ENCODE measurements at regions of chr1 and their contacts with region 1.

Region 1: DNA sequence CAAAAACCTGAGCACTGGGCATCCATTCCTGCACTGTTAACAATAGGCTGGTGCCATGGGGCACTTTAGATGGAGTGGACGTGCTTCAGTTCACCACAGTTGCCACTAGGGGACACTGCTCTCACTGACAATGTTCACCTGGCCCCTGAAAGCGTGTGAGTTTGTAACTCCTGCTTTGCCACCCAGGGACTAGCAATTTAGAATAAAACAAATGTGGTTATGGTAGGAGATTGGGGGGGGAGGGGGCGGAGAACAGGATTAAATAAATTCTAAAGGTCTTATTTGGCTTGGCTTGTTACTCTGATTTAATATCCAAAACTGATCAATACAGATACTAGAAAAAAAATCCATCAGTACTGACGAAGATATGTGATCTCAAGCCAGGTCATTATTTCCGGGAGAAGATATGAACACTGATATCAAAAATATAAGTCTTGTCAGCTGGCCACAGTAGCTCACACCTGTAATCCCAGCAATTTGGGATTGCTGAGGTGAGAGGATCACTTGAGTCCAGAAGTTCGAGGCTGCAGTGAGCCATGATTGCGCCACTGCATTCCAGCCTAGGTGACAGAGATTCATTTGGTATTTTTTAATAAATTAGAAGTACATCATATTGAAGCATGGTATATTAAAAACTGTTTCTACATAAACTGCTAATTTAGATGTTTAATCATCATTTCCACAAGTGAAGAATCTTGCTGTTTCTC is 23.2 kb downstream of the INTS7 start:
- DNase-seq: peak; percentile 16 to 55 (median 46)
- ATAC-seq: peak; percentile 100
- H3K4me3 ChIP-seq: no peak overlapping the region
- H3K4me3 Mint-ChIP-seq: no peak overlapping the region
- H3K27ac ChIP-seq: no peak overlapping the region
- H3K27ac Mint-ChIP-seq: no peak overlapping the region
- H3K4me1 ChIP-seq: no peaks in the 10 kb centered on the region
- H3K4me1 Mint-ChIP-seq: peaks cover 0 to 3% (median 0%) of the 10 kb centered on the region in 7 donors
- H3K27me3 ChIP-seq: no peaks in the 10 kb centered on the region
- H3K27me3 Mint-ChIP-seq: no peaks in the 10 kb centered on the region

Region 2: DNA sequence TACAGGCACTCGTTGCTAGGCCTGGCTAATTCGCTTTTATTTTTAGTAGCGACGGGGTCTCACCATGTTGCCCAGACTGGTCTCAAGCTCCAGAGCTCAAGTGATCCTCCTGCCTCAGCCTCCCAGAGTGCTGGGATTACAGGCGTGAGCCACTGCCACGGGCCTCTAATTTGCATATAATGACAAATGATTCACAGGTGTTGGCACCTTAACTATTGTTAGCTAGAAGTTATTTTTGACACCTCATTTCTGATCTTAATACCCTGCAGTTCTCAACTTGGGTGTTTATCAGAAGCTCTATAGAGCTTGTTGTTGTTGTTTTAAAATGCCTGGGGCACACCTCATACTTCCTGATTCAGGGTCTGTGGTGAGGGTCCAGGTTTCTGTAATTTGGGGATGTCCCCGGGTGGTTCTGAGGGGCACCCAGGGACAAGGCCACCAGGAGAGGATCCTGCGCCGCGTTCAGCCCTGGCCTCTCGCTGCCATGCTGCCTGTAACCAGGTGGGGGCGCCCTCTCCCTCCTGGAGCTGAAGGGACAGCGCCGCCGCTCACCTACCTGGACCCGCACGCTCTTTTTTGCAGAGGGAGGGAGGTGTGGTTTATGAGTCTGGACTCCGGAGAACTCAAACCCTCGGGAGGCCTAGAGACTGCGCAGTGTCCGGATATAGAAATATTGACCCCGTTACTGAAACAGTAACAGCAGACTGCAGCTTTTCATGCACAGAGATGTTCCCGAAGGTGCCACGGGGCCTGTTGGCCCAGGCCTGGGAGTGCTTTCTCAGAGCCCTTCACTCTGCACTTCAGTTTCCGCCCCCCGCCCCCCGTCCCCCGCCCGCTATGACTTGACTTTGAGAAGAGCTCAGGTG is 313.8 kb before region 1 on chr1:
- CTCF ChIA-PET with region 1: interaction called, 5 read pairs
- POLR2A ChIA-PET with region 1: no interaction called
- intact Hi-C with region 1: loop called in 1 of 2 experiments (anchors 1 kb)
- DNase-seq: peak; percentile 60 to 87 (median 72)
- ATAC-seq: peak; percentile 96
- H3K4me3 ChIP-seq: no peak overlapping the region
- H3K4me3 Mint-ChIP-seq: peak overlapping the region; percentile 23 to 83 (median 65)
- H3K27ac ChIP-seq: no peak overlapping the region
- H3K27ac Mint-ChIP-seq: peak overlapping the region in 2 of 9 donors; percentile 5 to 62
- H3K4me1 ChIP-seq: peaks cover 4 to 16% of the 10 kb centered on the region in 2 donors
- H3K4me1 Mint-ChIP-seq: peaks cover 0 to 42% (median 9%) of the 10 kb centered on the region in 7 donors
- H3K27me3 ChIP-seq: no peaks in the 10 kb centered on the region
- H3K27me3 Mint-ChIP-seq: peaks cover 0 to 37% (median 0%) of the 10 kb centered on the region in 5 donors

Region 3: GRCh38 chr1:212062832-212063438 is 50.7 kb after region 1 on chr1:
- CTCF ChIA-PET with region 1: interaction called, 5 read pairs
- POLR2A ChIA-PET with region 1: no interaction called
- intact Hi-C with region 1: loop called in 1 of 2 experiments (anchors 2 kb)
- DNase-seq: peak in 6 of 9 donors; percentile 8 to 41 (median 33)
- ATAC-seq: peak; percentile 71
- H3K4me3 ChIP-seq: no peak overlapping the region
- H3K4me3 Mint-ChIP-seq: no peak overlapping the region
- H3K27ac ChIP-seq: no peak overlapping the region
- H3K27ac Mint-ChIP-seq: no peak overlapping the region
- H3K4me1 ChIP-seq: no peaks in the 10 kb centered on the region
- H3K4me1 Mint-ChIP-seq: peaks cover 0 to 11% (median 0%) of the 10 kb centered on the region in 7 donors
- H3K27me3 ChIP-seq: no peaks in the 10 kb centered on the region
- H3K27me3 Mint-ChIP-seq: no peaks in the 10 kb centered on the region

Region 4: GRCh38 chr1:212368073-212368484 is 355.9 kb after region 1 on chr1:
- CTCF ChIA-PET with region 1: interaction called, 4 read pairs
- POLR2A ChIA-PET with region 1: no interaction called
- intact Hi-C with region 1: loop called (anchors 1 kb)
- DNase-seq: peak in 7 of 9 donors; percentile 34 to 67 (median 63)
- ATAC-seq: peak; percentile 95
- H3K4me3 ChIP-seq: no peak overlapping the region
- H3K4me3 Mint-ChIP-seq: no peak overlapping the region
- H3K27ac ChIP-seq: no peak overlapping the region
- H3K27ac Mint-ChIP-seq: peak overlapping the region in 4 of 9 donors; percentile 5 to 87 (median 52)
- H3K4me1 ChIP-seq: no peaks in the 10 kb centered on the region
- H3K4me1 Mint-ChIP-seq: peaks cover 0 to 9% (median 0%) of the 10 kb centered on the region in 7 donors
- H3K27me3 ChIP-seq: no peaks in the 10 kb centered on the region
- H3K27me3 Mint-ChIP-seq: no peaks in the 10 kb centered on the region

Measured in naive thymus-derived CD4-positive, alpha-beta T cell (primary cell).